Calu3 (cell line): ENCODE measurements at regions of chr12 and their contacts with region 1.

Region 1: GRCh38 chr12:101792051-101792931 is 38.5 kb downstream of the GNPTAB start:
- DNase-seq: no peak
- H3K4me3 Mint-ChIP-seq: no peak overlapping the region
- H3K27ac Mint-ChIP-seq: no peak overlapping the region
- H3K4me1 Mint-ChIP-seq: no peaks in the 10 kb centered on the region
- H3K27me3 Mint-ChIP-seq: no peaks in the 10 kb centered on the region
- CTCF ChIP-seq: no peak

Region 2: GRCh38 chr12:101830367-101831325 is 38.4 kb after region 1 on chr12 and contains the start of gene GNPTAB:
- CTCF ChIA-PET with region 1: interaction called, 3 read pairs
- intact Hi-C with region 1: loop called (anchors 5 kb)
- DNase-seq: peak; percentile 97
- H3K4me3 Mint-ChIP-seq: peak within 1 kb of the TSS; percentile 92
- H3K27ac Mint-ChIP-seq: peak within 1 kb of the TSS; percentile 73
- H3K4me1 Mint-ChIP-seq: peaks cover 8% of the 10 kb centered on the region
- H3K27me3 Mint-ChIP-seq: no peaks in the 10 kb centered on the region
- CTCF ChIP-seq: no peak
- total RNA-seq, gene GNPTAB: 34.0 and 36.0 TPM in 2 replicates